BJ (cell line): ENCODE measurements at regions of chr5 and their contacts with region 1.

Region 1: DNA sequence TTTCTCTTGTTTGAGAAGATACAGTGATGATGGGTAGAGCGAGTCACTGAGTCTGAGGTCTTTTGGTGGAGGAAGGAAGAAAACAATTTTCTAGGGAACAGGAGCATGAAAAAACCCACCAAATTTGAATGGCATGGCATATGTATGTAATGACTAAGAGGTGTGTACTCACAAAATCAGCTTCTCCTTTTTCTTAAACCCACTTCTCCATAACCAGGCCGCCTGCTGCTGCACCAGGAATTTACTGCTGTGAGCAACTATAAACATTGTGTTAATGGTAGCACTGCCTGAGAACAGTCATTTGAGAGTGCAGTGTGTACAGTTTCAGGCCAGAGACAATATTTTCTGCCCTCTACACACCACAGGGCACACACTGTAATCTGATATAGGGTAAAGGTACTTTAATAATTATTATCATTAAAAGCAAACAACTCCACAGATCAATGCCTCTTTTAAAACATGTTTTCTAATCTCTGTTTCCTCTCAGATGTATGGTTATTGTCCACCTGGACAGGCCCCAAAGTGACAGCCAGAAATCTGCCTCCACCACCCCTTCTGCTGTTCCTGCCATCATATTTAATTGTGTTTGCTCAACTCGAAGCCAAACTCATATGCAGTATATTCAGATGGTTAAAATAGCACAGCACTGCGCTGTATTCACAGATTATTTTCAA is 241.6 kb downstream of the KIAA0825 start:
- DNase-seq: no peak
- H3K4me3 ChIP-seq: no peak overlapping the region
- H3K27me3 ChIP-seq: no peaks in the 10 kb centered on the region
- CTCF ChIP-seq: no peak

Region 2: DNA sequence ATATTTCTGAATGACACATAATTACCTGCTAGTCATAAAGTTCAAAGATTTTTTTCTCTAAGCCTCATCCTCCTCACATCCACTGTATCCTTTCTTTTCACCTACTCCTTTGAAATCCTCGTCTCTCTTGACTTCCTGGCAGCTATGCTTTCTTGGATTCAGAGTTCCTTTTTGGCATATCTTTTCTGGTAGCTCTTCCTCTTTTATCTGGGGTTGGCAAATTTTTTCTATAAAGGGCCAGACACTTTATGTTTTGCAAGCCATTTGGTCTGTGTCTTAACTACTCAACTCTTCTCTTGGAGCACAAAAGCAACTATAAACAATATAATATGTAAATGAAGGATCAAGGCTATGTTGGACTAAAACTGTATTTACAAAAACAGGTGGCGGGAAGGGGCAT is 44.1 kb after region 1 on chr5:
- CTCF ChIA-PET with region 1: no interaction called
- POLR2A ChIA-PET with region 1: interaction called, 17 read pairs
- DNase-seq: no peak
- H3K4me3 ChIP-seq: no peak overlapping the region
- H3K27me3 ChIP-seq: no peaks in the 10 kb centered on the region
- CTCF ChIP-seq: no peak

Region 3: GRCh38 chr5:94640176-94640575 is 263.4 kb after region 1 on chr5:
- CTCF ChIA-PET with region 1: no interaction called
- POLR2A ChIA-PET with region 1: no interaction called
- DNase-seq: no peak
- H3K4me3 ChIP-seq: no peak overlapping the region
- H3K27me3 ChIP-seq: no peaks in the 10 kb centered on the region
- CTCF ChIP-seq: no peak